ENCODE measurements at regions of chr7 and their contacts with region 1.

Region 1: DNA sequence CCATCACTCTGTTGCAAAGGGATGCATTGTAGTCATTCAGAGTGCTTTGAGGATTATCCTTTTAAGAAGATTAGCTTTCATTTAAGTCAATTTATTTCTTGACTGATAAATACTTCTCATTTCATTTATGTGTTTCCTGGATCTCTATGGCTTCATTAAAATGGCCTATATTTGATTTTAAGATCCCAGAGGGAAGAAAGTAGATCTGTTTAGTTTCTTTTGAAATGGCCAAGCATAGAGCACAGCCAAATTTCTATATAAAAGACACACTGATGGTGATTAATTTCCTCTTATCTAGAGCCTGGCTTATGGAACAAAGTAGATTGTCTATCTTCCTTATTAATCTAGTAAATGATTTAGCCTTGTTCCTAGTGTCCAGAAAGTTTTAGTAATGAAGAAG is 129.7 kb upstream of the CALCR start:
- DNase-seq: no peak
- H3K4me3 Mint-ChIP-seq: no peak overlapping the region
- H3K27ac Mint-ChIP-seq: no peak overlapping the region
- H3K4me1 Mint-ChIP-seq: no peaks in the 10 kb centered on the region
- H3K27me3 Mint-ChIP-seq: no peaks in the 10 kb centered on the region

Region 2: DNA sequence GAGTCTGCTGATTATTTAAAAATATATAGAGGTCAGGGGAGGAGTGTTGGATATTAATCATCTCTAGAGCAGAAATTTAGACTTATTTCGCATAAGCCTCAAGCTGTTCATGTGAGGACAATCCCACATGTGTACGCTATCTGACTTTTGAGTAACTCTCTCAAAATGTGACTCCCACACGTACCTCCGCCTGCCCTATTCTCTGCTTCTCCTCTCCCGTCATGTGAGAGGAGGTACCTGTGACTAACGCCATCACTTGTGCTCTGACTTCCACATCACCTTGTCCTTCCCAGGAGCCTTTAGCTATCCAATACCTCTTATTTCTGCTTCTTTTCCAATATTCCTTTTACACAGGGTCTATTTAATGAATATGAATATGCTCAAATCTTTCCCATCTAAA is 10.4 kb before region 1 on chr7:
- intact Hi-C with region 1: loop called (anchors 1 kb)
- DNase-seq: no peak
- H3K4me3 Mint-ChIP-seq: no peak overlapping the region
- H3K27ac Mint-ChIP-seq: no peak overlapping the region
- H3K4me1 Mint-ChIP-seq: no peaks in the 10 kb centered on the region
- H3K27me3 Mint-ChIP-seq: no peaks in the 10 kb centered on the region

Region 3: DNA sequence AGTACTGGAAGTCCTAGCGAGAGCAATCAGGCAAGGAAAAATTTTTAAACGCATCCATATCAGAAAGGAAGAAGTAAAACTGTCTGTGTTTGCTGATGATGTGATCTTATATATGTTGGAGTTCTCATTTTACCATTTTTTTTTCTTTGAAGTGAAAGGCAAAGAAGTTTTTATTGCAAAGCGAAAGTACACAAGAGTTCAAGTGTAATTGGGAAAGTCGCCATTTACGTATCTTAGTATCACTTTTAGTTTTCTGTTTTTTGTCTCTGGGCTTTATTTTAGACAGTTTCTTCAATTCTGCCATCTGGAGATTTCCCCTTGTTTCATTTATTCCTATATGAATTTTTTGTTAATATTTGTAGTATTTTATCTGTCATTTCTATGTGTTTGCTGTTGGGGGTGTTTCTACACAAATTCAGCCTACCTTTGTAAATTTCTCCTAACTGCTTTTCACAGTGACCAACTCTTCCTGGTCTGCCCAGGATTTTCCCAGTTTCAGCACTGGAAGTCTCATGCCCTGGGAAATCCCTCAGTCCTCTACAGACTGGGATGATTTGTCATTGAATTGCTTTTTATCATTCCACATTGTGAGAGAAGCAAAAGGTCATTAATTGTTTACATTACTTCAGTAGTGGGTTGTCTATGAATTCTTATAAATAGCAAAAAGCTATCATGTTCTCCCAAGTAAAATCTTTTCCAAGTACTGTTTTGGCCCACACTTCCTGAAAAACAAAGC is 276.7 kb after region 1 on chr7:
- intact Hi-C with region 1: no loop called
- DNase-seq: no peak
- H3K4me3 Mint-ChIP-seq: no peak overlapping the region
- H3K27ac Mint-ChIP-seq: no peak overlapping the region
- H3K4me1 Mint-ChIP-seq: peaks cover 5% of the 10 kb centered on the region
- H3K27me3 Mint-ChIP-seq: no peaks in the 10 kb centered on the region